ENCODE measurements at regions of chr17 and their contacts with region 1.

Region 1: GRCh38 chr17:40177275-40177874 is at the start of gene RAPGEFL1:
- DNase-seq: peak; percentile 73 to 83 (median 78)
- H3K4me3 ChIP-seq: peak within 1 kb of the TSS in 2 of 4 donors; percentile 10 to 75
- H3K27ac ChIP-seq: no peak within 1 kb of the TSS
- H3K4me1 ChIP-seq: peaks cover 12 to 24% of the 10 kb centered on the region in 2 donors
- H3K27me3 ChIP-seq: no peaks in the 10 kb centered on the region
- CTCF ChIP-seq: no peak
- POLR2A ChIP-seq: peak in 1 of 2 donors; percentile 20
- total RNA-seq, gene RAPGEFL1: 0.24 to 5.7 (median 3.7) TPM

Region 2: DNA sequence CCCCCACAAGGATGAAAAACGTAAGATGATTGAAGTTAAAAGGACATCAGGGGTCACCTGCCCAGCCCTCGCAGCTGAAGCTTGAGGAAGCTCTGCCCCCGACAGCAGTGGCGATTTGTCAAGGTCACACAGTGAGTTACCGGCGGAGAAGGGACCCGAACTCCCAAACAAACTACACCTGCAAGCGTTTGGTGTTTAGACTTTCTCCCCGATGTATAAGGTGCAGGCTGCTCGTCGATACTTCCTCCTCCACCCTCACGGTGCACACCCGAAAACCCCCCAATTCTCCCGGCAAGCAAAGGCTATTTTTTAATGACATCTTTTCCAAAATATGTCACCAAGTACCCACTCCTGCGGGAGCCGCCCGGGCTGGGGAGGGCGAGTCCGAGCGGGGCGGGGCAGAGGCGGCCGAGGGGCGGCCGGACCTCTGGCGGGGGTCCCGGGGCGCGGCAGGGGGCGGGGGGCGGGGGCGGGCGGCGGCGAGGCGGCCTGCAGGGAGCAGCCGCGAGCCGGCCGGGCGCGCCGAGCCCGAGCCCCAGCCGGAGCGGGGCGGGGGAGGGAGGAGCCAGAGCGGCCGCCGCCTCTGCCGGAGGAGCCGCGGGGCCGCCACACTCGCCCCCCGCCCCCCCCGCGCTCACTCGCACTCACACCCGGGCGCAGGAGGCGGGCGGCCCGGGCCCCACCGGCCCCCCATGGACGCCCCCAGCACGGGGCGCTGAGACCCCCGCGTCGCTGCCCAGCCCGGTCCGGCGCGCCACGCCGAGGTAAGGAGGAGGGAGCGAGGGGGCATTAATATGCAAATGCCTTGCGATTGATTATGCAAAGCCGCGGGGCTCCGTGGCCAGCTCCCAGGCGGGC is 114.8 kb before region 1 on chr17 and contains the start of gene THRA:
- intact Hi-C with region 1: loop called in 1 of 2 experiments (anchors 10 kb)
- DNase-seq: peak; percentile 55 to 78 (median 73)
- H3K4me3 ChIP-seq: peak within 1 kb of the TSS; percentile 73 to 100 (median 91)
- H3K27ac ChIP-seq: peak within 1 kb of the TSS; percentile 72 to 96 (median 93)
- H3K4me1 ChIP-seq: peaks cover 23 to 40% of the 10 kb centered on the region in 2 donors
- H3K27me3 ChIP-seq: no peaks in the 10 kb centered on the region
- CTCF ChIP-seq: peak in 2 of 6 experiments; percentile 9 to 35
- POLR2A ChIP-seq: no peak
- total RNA-seq, gene THRA: 39.2 to 110 (median 73.8) TPM

Region 3: DNA sequence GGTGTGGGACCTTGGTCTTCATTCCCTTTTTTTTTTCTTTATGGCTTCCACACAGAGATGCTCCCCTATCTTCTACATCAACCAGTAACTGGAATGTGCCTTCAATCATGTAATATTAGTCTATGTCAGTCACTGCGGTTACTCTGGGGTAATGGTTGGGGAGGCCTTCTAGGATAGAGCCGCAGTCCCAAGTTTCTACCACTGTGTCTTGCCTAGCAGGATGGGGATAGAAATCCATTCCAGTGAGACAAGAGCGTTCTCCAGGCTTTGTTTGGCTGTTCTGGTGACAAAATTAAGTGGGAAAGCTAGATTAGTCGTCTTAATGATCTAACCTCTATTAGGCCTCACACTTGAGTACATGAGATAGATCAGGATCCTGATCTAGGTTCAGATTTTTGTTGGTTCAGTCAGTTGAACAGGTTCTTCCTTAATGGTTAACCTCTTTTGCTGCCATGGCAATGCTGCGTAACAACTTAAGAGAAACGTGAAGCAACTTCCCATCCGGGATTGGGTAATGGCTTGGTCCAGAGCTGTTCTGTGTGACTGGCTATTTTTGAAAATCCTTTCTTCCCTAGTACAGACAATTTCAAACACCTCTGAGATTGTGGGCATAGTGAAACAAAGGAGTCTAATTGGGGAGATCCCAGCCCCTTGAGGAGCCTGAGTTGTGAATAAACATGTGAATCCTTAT is 46.9 kb before region 1 on chr17:
- intact Hi-C with region 1: loop called in 1 of 2 experiments (anchors 5 kb)
- DNase-seq: peak in 2 of 7 donors; percentile 50 to 71
- H3K4me3 ChIP-seq: no peak overlapping the region
- H3K27ac ChIP-seq: peak overlapping the region in 1 of 5 donors; percentile 27
- H3K4me1 ChIP-seq: peaks cover 0 to 3% of the 10 kb centered on the region in 2 donors
- H3K27me3 ChIP-seq: no peaks in the 10 kb centered on the region
- CTCF ChIP-seq: no peak
- POLR2A ChIP-seq: no peak

Region 4: GRCh38 chr17:40219073-40219860 is 41.9 kb after region 1 on chr17 and contains the start of gene WIPF2:
- intact Hi-C with region 1: no loop called
- DNase-seq: peak; percentile 96 to 98 (median 97)
- H3K4me3 ChIP-seq: peak within 1 kb of the TSS in 3 of 4 donors; percentile 38 to 70 (median 66)
- H3K27ac ChIP-seq: peak within 1 kb of the TSS; percentile 58 to 95 (median 90)
- H3K4me1 ChIP-seq: peaks cover 3 to 22% of the 10 kb centered on the region in 2 donors
- H3K27me3 ChIP-seq: no peaks in the 10 kb centered on the region
- CTCF ChIP-seq: peak; percentile 71 to 92 (median 78)
- POLR2A ChIP-seq: peak; percentile 17 to 82
- total RNA-seq, gene WIPF2: 5.2 to 30.2 (median 17.4) TPM

Measured in adrenal gland (tissue), 19 donors.